CD4-positive, alpha-beta memory T cell (primary cell): ENCODE measurements at regions of chr6 and their contacts with region 1.

Region 1: DNA sequence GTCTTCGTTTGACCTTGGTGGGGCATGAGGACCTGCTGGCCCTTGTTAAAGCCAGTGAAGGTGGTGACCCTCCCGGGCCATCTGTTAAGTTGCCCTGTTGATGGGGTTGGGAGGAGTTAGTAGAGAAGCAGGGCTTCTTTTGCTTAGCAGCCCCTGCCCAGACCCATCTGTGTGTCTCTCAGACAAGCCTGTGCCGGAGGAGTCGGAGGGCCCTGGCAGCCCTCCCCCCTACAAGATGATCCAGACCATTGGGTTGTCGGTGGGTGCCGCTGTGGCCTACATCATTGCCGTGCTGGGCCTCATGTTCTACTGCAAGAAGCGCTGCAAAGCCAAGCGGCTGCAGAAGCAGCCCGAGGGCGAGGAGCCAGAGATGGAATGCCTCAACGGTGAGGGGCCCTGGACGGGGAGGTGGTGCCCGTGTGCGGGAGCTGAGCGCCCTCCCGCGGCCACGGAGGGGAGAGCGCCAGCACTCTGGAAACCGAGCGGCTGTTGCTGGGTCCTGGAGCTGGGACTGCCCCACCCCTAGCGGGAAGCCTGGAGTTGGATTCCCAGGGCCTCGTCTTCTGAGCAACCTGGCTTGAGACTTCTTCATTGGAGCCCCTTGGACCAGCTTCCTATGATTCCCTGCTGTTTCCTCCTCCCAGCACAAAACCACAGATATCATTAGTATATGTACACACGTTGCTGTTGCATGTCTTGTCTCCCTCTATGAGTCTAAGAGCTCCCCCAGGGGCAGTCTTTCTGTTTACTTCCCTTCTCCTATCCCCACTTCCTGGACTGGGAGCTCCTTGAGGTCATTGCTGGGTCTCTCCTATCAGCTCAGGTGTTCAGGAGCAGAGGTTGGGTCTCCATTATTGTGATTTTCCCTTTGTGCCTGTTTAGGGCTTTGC is 27.6 kb upstream of the SRF start:
- DNase-seq: peak; percentile 67 to 79 (median 71)
- H3K4me3 ChIP-seq: no peak overlapping the region
- H3K4me3 Mint-ChIP-seq: peak overlapping the region in 3 of 8 donors; percentile 39 to 69 (median 43)
- H3K27ac ChIP-seq: no peak overlapping the region
- H3K27ac Mint-ChIP-seq: peak overlapping the region in 1 of 7 donors; percentile 85
- H3K4me1 ChIP-seq: peaks cover 12% of the 10 kb centered on the region
- H3K4me1 Mint-ChIP-seq: peaks cover 1 to 11% (median 3%) of the 10 kb centered on the region in 4 donors
- H3K27me3 ChIP-seq: no peaks in the 10 kb centered on the region
- H3K27me3 Mint-ChIP-seq: peaks cover 0 to 1% of the 10 kb centered on the region in 2 donors

Region 2: GRCh38 chr6:42652024-42652746 is 491.3 kb before region 1 on chr6:
- CTCF ChIA-PET with region 1: interaction called, 10 read pairs
- POLR2A ChIA-PET with region 1: no interaction called
- intact Hi-C with region 1: no loop called
- DNase-seq: no peak
- H3K4me3 ChIP-seq: no peak overlapping the region
- H3K4me3 Mint-ChIP-seq: no peak overlapping the region
- H3K27ac ChIP-seq: no peak overlapping the region
- H3K27ac Mint-ChIP-seq: no peak overlapping the region
- H3K4me1 ChIP-seq: no peaks in the 10 kb centered on the region
- H3K4me1 Mint-ChIP-seq: no peaks in the 10 kb centered on the region
- H3K27me3 ChIP-seq: no peaks in the 10 kb centered on the region
- H3K27me3 Mint-ChIP-seq: no peaks in the 10 kb centered on the region

Region 3: GRCh38 chr6:42901536-42901957 is 241.9 kb before region 1 on chr6:
- CTCF ChIA-PET with region 1: interaction called, 69 read pairs
- POLR2A ChIA-PET with region 1: interaction called, 3 read pairs
- intact Hi-C with region 1: loop called (anchors 1 kb)
- DNase-seq: peak; percentile 71 to 80 (median 77)
- H3K4me3 ChIP-seq: no peak overlapping the region
- H3K4me3 Mint-ChIP-seq: no peak overlapping the region
- H3K27ac ChIP-seq: no peak overlapping the region
- H3K27ac Mint-ChIP-seq: peak overlapping the region in 1 of 7 donors; percentile 4
- H3K4me1 ChIP-seq: peaks cover 8% of the 10 kb centered on the region
- H3K4me1 Mint-ChIP-seq: peaks cover 4 to 11% (median 6%) of the 10 kb centered on the region in 4 donors
- H3K27me3 ChIP-seq: no peaks in the 10 kb centered on the region
- H3K27me3 Mint-ChIP-seq: no peaks in the 10 kb centered on the region

Region 4: GRCh38 chr6:42963855-42964605 is 179.4 kb before region 1 on chr6:
- CTCF ChIA-PET with region 1: interaction called, 15 read pairs
- POLR2A ChIA-PET with region 1: no interaction called
- intact Hi-C with region 1: no loop called
- DNase-seq: peak in 3 of 5 donors; percentile 28 to 42 (median 37)
- H3K4me3 ChIP-seq: no peak overlapping the region
- H3K4me3 Mint-ChIP-seq: no peak overlapping the region
- H3K27ac ChIP-seq: no peak overlapping the region
- H3K27ac Mint-ChIP-seq: no peak overlapping the region
- H3K4me1 ChIP-seq: peaks cover 11% of the 10 kb centered on the region
- H3K4me1 Mint-ChIP-seq: peaks cover 7 to 27% (median 11%) of the 10 kb centered on the region in 4 donors
- H3K27me3 ChIP-seq: no peaks in the 10 kb centered on the region
- H3K27me3 Mint-ChIP-seq: no peaks in the 10 kb centered on the region

Region 5: DNA sequence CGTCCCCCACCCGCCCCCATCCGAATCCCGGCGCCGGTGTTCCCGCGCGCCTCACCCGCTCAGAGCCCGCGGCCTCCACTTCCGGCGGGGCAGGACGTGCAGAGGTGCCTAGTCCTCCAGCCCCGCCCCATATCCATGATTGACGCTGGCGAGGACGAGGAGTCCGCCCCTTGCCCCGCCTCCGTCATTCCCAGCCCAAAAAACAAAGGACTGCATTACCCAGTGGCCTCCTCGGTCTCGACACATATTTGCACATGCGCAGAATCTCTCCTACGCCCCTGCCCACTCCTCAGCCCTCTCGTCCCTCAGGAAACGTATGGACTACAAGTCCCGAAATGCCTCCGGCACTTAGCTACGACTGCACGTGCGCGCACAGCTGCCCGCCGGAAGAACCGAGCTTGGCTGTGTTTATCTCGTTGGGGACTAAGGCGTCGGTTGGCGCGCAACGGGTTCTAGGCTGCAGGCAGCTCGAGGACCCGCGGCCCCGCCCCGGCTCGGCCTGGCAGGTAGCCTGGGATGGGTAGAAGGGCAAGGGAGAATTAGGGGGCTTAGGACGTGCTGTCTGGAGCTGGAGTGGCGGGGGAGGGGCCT is 129.5 kb before region 1 on chr6 and contains the starts of genes KLHDC3 and MEA1:
- CTCF ChIA-PET with region 1: interaction called, 16 read pairs
- POLR2A ChIA-PET with region 1: interaction called, 5 read pairs
- intact Hi-C with region 1: loop called (anchors 1 kb)
- DNase-seq: peak; percentile 98 to 100 (median 100)
- H3K4me3 ChIP-seq: peak within 1 kb of the TSS; percentile 75 to 84
- H3K4me3 Mint-ChIP-seq: peak within 1 kb of the TSS; percentile 91 to 97 (median 94)
- H3K27ac ChIP-seq: peak within 1 kb of the TSS; percentile 71
- H3K27ac Mint-ChIP-seq: peak within 1 kb of the TSS; percentile 75 to 98 (median 94)
- H3K4me1 ChIP-seq: peaks cover 54% of the 10 kb centered on the region
- H3K4me1 Mint-ChIP-seq: peaks cover 39 to 71% (median 56%) of the 10 kb centered on the region in 4 donors
- H3K27me3 ChIP-seq: no peaks in the 10 kb centered on the region
- H3K27me3 Mint-ChIP-seq: no peaks in the 10 kb centered on the region
- total RNA-seq, gene KLHDC3: 66.6 to 67.9 TPM
- total RNA-seq, gene MEA1: 36.2 to 36.3 TPM

Region 6: DNA sequence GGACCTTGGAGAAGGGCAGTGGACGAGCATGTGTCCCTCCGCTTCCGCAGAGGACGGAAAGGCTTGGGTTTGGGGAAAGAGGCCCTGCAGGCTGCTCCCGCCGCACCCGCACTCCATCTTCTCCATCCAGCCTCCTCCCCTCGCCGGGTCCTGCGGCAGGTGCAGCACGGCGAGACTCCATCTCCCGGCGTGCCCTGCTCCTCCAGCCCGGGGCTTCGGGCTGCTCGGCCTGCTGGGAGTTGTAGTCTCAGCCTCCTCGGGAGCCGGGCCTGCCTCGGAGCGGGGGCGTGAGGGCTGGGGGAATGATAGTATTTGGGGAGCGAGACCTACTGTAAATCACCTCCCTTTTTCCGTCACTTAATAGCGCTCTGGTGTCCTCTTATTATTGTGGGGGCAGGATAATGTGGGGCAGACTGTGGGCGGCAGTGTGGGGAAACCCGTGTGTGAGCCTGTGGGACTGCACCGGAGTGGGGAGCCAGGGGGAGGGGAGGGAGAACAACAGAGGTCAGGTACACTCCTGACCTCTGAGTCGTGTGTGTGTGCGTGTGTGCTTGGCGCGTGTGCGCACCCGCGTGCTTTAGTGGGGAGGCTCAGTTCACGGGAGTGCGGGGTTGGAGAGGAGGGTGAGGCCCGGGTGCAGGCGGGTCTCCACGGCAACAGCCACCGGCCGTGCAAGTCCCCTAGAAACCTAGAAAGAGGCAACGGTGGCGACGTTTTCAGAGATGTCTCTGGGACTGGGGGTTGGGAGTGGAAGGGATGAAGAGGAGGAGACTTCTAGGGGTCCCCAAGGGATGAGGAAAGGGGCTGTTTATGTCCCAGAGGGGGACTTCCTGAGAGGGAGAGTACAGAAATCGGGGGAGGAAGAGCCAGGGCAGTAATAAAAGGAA is 103.9 kb after region 1 on chr6:
- CTCF ChIA-PET with region 1: no interaction called
- POLR2A ChIA-PET with region 1: no interaction called
- intact Hi-C with region 1: no loop called
- DNase-seq: peak; percentile 77 to 85 (median 80)
- H3K4me3 ChIP-seq: peak overlapping the region; percentile 70 to 82
- H3K4me3 Mint-ChIP-seq: peak overlapping the region in 7 of 8 donors; percentile 85 to 90 (median 90)
- H3K27ac ChIP-seq: peak overlapping the region; percentile 52
- H3K27ac Mint-ChIP-seq: peak overlapping the region; percentile 86 to 97 (median 93)
- H3K4me1 ChIP-seq: peaks cover 12% of the 10 kb centered on the region
- H3K4me1 Mint-ChIP-seq: peaks cover 8 to 23% (median 13%) of the 10 kb centered on the region in 4 donors
- H3K27me3 ChIP-seq: peaks cover 25% of the 10 kb centered on the region
- H3K27me3 Mint-ChIP-seq: peaks cover 6 to 15% of the 10 kb centered on the region in 2 donors